ENCODE measurements at regions of chr4 and their contacts with region 1.

Region 1: DNA sequence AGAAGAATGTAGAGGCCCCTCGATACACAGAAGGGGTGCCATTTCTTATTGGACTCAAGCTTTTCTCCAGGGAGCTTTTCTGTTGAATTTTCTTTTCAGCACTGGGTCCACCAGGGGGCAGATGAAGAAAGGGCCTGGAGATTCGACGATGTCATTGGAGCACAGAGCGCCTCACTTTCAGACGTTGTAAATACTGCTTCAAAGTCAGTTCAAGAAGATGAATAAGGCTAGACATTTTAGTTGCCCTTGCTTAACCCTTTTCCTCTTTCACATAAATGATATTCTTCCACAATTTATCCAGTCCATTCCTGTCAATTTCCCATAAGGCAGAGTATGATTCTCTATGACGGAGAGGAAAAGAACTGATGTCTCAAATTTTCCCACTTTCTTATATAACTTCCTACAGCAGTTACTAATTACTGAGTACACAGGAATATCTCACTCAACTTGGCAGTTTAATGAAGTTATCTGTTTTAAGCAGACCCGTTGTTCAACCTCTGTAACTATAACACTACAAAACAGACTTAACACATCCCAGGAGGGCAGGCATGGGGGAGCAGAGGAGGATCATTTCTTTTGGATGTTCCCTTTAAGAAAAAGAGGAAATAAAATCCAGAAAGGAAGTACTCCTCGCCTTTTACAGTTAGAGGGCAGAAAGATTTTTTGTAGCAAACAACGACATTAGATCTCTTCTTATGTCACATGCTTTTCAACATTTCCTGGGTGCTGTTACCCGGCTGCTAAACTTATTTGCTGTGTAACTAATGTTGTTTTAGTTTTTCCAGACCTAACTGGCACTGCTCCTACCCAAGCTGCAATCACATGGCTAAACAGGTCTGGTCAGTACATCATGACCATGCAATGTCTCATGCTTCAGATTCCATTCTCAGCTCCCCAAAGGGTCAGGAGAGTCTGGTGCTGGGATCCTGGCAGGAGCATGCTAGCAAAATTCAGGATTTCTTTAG is 12.2 kb upstream of the CENPU start:
- DNase-seq: peak; percentile 76
- H3K4me3 ChIP-seq: no peak overlapping the region
- H3K27ac ChIP-seq: no peak overlapping the region
- H3K4me1 ChIP-seq: peaks cover 4% of the 10 kb centered on the region
- H3K27me3 ChIP-seq: no peaks in the 10 kb centered on the region
- CTCF ChIP-seq: peak; percentile 70 to 72
- POLR2A ChIP-seq: no peak

Region 2: DNA sequence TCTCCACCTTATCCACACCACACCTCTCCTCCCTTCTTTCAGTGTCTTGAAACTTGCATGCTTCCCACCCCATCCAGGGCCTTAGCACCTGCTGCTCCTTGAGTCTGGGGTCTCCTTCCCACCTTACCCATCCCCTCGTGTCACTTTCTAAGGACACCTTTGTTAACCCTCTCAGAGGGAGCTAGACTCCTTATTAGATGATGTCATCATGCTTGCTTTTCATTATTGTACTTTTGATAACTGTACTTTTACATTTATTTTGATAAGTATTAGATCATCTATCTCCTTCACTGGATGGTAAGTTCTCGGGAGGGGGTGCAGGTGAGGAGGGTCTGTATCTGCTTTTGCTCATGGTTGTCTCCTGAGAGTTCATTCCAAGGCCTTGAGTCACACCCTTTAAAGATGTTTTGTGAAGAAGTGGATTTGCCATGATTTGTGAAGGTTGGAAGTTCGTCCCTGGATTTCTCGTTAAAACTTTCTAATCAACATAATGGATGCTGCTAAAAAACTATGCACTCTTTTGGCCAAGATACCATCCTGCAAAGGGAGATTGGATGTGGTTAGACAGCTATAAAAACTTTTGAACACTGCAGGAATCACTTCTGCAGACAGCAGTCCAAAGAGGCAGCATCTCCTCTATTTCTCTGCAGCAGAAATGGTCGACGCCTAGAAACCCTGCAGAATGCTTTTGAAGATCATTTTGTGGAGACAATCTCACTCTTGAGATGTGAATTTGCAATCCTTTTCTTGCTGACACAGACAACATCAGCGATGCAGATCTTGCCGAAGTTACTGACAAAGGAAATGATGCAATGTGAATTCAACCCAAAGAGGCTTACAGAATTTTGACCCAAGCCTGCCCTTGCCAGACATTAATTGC is 598.0 kb before region 1 on chr4:
- CTCF ChIA-PET with region 1: no interaction called
- POLR2A ChIA-PET with region 1: no interaction called
- dilution Hi-C with region 1: no loop called
- intact Hi-C with region 1: no loop called
- DNase-seq: no peak
- H3K4me3 ChIP-seq: no peak overlapping the region
- H3K27ac ChIP-seq: no peak overlapping the region
- H3K4me1 ChIP-seq: no peaks in the 10 kb centered on the region
- H3K27me3 ChIP-seq: no peaks in the 10 kb centered on the region
- CTCF ChIP-seq: no peak
- POLR2A ChIP-seq: no peak

Region 3: DNA sequence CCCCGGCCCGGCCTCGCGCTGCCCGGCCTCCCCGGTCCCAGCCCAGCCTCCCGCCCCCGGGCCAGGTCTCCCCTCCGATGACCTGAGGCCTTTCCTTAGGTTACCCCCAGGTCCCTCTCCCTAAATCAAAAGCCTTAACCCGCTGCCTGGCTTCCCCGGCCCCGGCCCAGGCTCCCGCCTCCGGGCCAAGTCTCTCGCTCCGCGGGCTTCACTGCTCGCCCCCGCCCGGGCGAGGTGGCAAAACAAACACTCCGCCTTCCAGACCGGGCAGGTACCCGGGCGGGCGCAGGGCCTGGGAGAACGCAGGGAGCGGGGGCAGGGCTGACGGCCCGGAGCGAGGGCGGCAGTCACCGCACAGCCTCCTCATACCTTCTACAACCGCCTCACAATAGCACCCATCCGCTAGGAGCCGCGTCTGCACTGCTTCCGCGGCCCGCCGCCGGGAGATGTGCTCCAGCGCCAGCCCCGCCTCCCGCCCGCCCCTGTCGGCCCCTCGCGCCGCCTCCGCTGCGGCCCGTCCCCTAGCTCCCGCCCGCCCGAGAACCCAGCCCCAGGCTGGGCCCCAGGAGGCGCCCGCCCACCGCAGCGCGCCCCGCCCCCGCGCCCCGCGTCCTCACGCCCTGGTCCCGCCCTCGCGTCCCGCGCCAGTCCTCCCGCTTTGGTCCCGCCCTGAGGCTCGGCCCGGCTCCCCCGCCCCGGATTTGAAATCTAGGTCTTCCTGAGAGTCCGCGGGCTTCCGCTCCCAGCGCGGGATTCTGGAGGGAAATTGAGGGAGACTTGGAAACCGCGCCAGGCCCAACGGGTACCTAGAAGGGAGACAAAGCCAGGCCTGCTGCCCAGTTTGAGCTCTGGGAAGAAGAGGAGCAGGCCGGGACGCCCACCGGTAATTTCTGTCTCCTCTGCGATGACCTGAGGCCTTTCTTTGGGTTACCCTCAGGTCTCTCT is 96.8 kb before region 1 on chr4 and contains the starts of genes CASP3 and PRIMPOL:
- CTCF ChIA-PET with region 1: interaction called, 6 read pairs
- POLR2A ChIA-PET with region 1: no interaction called
- dilution Hi-C with region 1: no loop called
- intact Hi-C with region 1: loop called (anchors 1 kb)
- DNase-seq: peak; percentile 97
- H3K4me3 ChIP-seq: peak within 1 kb of the TSS; percentile 49 to 89 (median 78)
- H3K27ac ChIP-seq: peak within 1 kb of the TSS; percentile 96
- H3K4me1 ChIP-seq: peaks cover 44% of the 10 kb centered on the region
- H3K27me3 ChIP-seq: no peaks in the 10 kb centered on the region
- CTCF ChIP-seq: peak in 1 of 2 donors; percentile 37
- POLR2A ChIP-seq: peak; percentile 87
- total RNA-seq, gene CASP3: 54.5 and 66.1 TPM in 2 replicates
- total RNA-seq, gene PRIMPOL: 11.1 and 13.6 TPM in 2 replicates

Region 4: DNA sequence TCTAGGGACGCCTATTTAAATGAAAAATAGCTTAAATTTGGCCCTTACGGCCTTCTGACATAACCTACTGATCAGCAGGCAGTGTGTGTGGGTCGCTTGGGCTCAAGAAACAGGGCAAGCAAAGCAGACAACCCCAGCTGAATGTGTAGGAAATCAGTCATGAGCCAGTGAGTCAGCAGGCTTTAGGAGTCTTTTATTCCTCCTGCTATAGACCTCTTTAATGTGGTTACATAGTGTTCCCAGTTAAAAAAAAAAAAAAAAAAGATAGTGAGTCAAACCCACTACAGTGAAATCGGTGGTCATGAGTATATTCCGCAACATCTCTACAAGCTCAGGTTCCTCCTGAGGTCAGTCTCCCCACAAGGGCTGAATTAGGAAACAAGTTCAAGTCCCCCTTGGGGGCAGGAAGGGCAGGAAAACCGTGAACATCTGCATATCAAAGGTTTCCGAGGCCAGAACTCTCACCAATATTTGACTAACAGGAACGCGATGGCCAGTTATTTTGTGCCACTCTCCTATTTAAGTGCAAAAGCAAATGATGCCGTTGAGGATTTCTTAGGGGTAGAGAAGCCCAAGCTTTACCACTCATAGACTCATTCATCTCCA is 46.9 kb after region 1 on chr4:
- CTCF ChIA-PET with region 1: interaction called, 19 read pairs
- POLR2A ChIA-PET with region 1: no interaction called
- dilution Hi-C with region 1: no loop called
- intact Hi-C with region 1: no loop called
- DNase-seq: peak; percentile 76
- H3K4me3 ChIP-seq: no peak overlapping the region
- H3K27ac ChIP-seq: peak overlapping the region; percentile 66
- H3K4me1 ChIP-seq: peaks cover 15% of the 10 kb centered on the region
- H3K27me3 ChIP-seq: no peaks in the 10 kb centered on the region
- CTCF ChIP-seq: no peak
- POLR2A ChIP-seq: no peak

Region 5: GRCh38 chr4:184825896-184826690 is 80.0 kb after region 1 on chr4 and contains the start of gene ACSL1:
- CTCF ChIA-PET with region 1: interaction called, 18 read pairs
- POLR2A ChIA-PET with region 1: no interaction called
- dilution Hi-C with region 1: no loop called
- intact Hi-C with region 1: loop called (anchors 1 kb)
- DNase-seq: peak; percentile 48
- H3K4me3 ChIP-seq: peak within 1 kb of the TSS; percentile 43 to 62 (median 51)
- H3K27ac ChIP-seq: peak within 1 kb of the TSS; percentile 40
- H3K4me1 ChIP-seq: peaks cover 13% of the 10 kb centered on the region
- H3K27me3 ChIP-seq: peaks cover 0 to 2% of the 10 kb centered on the region in 2 experiments
- CTCF ChIP-seq: no peak
- POLR2A ChIP-seq: no peak
- total RNA-seq, gene ACSL1: 17.7 and 18.9 TPM in 2 replicates

Region 6: DNA sequence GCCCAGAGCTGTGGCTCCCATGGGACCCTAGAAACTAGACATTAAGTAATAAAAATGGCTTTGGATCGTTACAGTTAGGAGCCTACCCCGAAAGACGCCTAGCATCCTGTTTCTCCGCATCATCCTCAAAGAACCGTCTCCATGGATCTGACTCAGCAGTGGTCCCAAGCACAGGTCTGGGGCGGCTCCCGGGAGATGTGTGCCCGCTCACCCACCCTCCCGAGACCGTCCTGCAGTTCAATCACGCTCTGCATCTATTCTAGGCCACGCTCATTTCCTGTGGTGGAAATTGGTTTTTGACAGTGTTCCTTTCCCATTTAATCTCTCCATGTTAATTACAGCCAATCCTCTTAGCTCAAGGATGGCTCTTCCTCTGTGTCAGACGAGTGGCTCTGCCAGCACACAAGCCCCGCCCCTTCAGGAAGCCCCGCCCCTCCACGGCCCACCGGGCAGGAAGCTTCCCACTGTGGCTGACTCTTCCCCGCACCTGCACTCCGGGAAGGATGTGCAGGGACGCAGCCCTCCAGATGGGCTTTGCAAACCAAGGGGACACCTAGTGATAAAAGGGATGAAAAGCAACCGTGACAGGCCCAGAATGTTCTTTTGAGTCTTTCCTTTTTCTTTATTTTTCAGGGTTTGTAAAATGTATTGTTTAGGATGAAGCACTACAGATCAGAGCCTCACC is 237.7 kb after region 1 on chr4:
- CTCF ChIA-PET with region 1: interaction called, 40 read pairs
- POLR2A ChIA-PET with region 1: no interaction called
- dilution Hi-C with region 1: no loop called
- intact Hi-C with region 1: loop called (anchors 2 kb)
- DNase-seq: peak; percentile 25
- H3K4me3 ChIP-seq: no peak overlapping the region
- H3K27ac ChIP-seq: no peak overlapping the region
- H3K4me1 ChIP-seq: no peaks in the 10 kb centered on the region
- H3K27me3 ChIP-seq: peaks cover 0 to 1% of the 10 kb centered on the region in 2 experiments
- CTCF ChIP-seq: no peak
- POLR2A ChIP-seq: no peak

Region 7: GRCh38 chr4:185011408-185011807 is 265.3 kb after region 1 on chr4:
- CTCF ChIA-PET with region 1: interaction called, 23 read pairs
- POLR2A ChIA-PET with region 1: no interaction called
- dilution Hi-C with region 1: no loop called
- intact Hi-C with region 1: no loop called
- DNase-seq: no peak
- H3K4me3 ChIP-seq: no peak overlapping the region
- H3K27ac ChIP-seq: no peak overlapping the region
- H3K4me1 ChIP-seq: no peaks in the 10 kb centered on the region
- H3K27me3 ChIP-seq: peaks cover 43 to 46% of the 10 kb centered on the region in 2 experiments
- CTCF ChIP-seq: peak; percentile 50 to 81
- POLR2A ChIP-seq: no peak

Region 8: GRCh38 chr4:185134307-185134869 is 388.3 kb after region 1 on chr4:
- CTCF ChIA-PET with region 1: interaction called, 24 read pairs
- POLR2A ChIA-PET with region 1: no interaction called
- dilution Hi-C with region 1: no loop called
- intact Hi-C with region 1: loop called (anchors 1 kb)
- DNase-seq: peak; percentile 56
- H3K4me3 ChIP-seq: no peak overlapping the region
- H3K27ac ChIP-seq: no peak overlapping the region
- H3K4me1 ChIP-seq: peaks cover 4% of the 10 kb centered on the region
- H3K27me3 ChIP-seq: no peaks in the 10 kb centered on the region
- CTCF ChIP-seq: peak; percentile 32 to 53
- POLR2A ChIP-seq: no peak